ENCODE measurements at regions of chr6 and their contacts with region 1.

Region 1: DNA sequence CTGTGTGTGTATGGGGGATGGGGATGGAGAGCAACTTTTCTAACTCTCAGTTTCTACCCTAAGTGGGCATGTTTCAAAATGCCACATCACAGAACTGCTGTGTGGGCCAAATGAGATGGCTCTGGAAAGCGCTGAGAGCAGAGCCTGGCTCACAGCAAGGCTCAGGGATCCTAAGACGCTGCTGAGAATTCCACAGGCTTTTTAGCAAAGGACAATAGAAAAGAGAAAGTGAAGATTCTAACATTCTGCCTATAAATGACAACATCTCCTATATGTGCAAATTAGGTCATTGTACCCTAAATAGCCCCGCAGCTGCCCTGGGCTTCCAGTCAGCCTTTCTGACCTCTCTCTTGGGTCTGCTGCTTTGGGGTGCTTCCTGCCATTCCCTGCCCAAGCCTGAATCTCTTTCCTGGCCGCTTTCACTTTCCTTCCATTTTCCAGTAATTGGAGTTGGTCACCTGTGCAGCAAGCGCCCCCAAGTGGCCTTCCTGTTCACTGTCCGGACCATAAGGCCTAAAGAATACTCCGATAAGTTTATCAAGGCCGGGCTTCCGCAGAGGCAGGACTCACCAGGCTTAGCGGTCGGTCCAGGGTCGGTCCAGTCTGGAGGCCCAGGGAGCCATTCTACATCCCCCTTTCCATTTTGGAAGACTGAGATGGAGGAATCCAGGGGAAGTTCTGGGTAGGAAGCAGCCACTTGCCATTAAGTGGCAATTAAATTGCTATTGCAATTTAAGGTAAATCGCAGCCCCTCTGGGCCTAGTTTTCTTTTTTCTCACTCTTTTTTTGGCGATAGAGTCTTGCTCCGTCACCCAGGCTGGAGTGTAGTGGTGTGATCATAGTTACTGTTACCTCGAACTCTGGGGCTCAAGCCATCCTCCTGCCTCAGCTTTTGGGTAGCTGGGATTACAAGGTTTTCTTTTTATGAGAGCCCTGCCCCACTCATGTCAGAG is 6.6 kb upstream of the DDR1 start:
- DNase-seq: peak; percentile 95

Region 2: GRCh38 chr6:30814136-30815040 is 63.3 kb before region 1 on chr6:
- intact Hi-C with region 1: no loop called
- DNase-seq: peak; percentile 72

Region 3: GRCh38 chr6:30828027-30828960 is 49.4 kb before region 1 on chr6:
- intact Hi-C with region 1: loop called (anchors 2 to 5 kb)
- DNase-seq: peak; percentile 96